ENCODE measurements at regions of chr19 and their contacts with region 1.

Region 1: DNA sequence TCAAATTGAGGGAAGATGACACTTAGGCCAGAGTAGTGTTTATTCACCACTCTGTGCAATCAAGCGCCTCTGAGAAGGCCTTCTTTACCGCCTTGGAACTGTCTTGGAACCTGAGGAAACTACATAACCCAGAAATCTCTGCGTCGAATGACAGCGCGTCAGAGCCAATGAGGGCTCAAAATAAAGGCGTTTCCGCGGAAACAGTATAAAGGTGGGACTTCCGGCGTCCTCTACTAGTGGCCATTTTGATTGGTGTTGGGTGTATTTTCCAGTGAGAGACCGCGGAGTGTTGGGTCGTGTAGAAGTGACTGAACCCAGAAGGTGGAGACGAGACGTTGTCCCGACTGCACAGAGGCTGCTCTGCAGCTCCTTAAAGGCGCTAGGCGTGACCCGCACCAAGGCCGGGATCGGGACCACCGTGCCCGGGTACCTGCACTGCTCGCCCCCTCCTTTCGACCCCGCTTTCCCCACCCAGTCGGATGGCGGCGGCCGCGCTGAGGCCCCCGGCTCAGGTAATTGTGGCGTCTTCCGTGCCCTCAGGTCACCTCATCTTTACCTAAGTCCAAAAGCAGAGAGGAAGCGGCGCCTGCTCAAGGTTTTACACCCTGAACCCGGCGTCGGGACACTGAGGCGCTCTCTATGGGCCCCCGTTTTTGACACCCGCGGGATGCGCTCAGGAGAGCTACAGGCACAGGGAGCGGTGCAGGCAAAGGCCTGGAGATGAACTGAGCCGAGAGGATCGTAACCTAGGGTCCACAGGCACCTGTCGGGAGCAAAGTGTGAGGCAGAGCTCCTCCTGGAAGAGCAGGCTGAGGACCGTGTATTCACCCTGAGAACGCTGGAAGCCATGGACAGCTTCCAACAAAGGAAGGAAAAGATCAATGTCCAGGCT is at the start of gene ZNF776:
- DNase-seq: peak; percentile 78 to 90 (median 87)
- ATAC-seq: peak; percentile 97 to 98
- H3K4me3 ChIP-seq: peak within 1 kb of the TSS; percentile 93
- H3K27ac ChIP-seq: peak within 1 kb of the TSS; percentile 55
- H3K4me1 ChIP-seq: peaks cover 9% of the 10 kb centered on the region
- H3K27me3 ChIP-seq: no peaks in the 10 kb centered on the region
- total RNA-seq, gene ZNF776: 11.9 to 16.0 (median 13.7) TPM

Region 2: DNA sequence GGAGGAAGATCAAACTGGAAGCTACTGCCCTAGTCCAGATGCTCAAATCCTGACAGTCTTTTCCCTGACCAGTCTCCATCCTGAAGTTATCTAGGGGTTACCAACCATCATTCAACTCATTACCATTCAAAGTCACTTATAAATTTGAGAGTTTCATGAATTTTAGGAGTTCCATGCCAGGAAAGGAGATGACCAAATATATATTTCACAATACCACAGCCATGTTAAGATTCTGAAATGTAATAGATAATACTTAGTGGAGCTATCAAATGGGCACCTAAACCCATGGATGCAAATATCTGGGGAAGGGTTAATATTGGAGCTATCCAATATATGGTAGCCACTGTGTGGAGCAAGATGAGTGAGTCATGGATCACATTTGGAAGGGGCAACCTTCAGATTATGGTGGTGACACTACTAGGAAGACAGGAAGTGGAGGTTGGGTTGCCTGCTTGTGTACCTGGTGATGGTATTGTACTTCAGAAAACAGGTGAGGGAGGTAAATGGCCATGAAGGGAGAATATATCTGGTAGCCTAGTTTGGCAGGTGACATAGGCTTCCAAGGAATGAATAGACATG is 41.4 kb after region 1 on chr19:
- intact Hi-C with region 1: no loop called
- DNase-seq: no peak
- ATAC-seq: no peak
- H3K4me3 ChIP-seq: no peak overlapping the region
- H3K27ac ChIP-seq: no peak overlapping the region
- H3K4me1 ChIP-seq: no peaks in the 10 kb centered on the region
- H3K27me3 ChIP-seq: no peaks in the 10 kb centered on the region

Region 3: GRCh38 chr19:57814505-57815251 is 67.9 kb after region 1 on chr19 and contains the start of gene ZNF552:
- intact Hi-C with region 1: loop called in 1 of 4 experiments (anchors 2 kb)
- DNase-seq: peak; percentile 87 to 94 (median 89)
- ATAC-seq: peak; percentile 95 to 96
- H3K4me3 ChIP-seq: peak within 1 kb of the TSS; percentile 64
- H3K27ac ChIP-seq: peak within 1 kb of the TSS; percentile 70
- H3K4me1 ChIP-seq: peaks cover 4% of the 10 kb centered on the region
- H3K27me3 ChIP-seq: no peaks in the 10 kb centered on the region
- total RNA-seq, gene ZNF552: 3.3 to 5.8 (median 3.8) TPM

Region 4: DNA sequence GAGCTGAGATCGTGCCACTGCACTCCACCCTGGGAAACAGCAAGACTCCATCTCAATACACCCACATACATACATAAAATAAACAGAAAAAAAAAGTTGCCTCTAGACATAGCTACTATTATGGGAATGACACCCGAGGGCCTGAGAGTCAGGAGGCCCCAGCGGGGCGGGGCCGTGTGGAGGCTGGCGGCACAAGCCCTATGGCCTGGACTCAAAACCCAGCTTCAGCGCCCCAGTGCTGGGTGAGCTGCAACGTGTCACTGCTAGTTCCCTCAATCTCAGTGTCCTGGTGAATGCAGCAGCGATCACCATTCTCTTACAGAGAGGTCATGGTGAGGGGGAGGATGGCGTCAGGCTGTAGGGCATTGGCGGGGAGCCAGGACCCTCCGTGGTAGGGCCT is 277.8 kb after region 1 on chr19:
- intact Hi-C with region 1: no loop called
- DNase-seq: no peak
- ATAC-seq: no peak
- H3K4me3 ChIP-seq: no peak overlapping the region
- H3K27ac ChIP-seq: no peak overlapping the region
- H3K4me1 ChIP-seq: no peaks in the 10 kb centered on the region
- H3K27me3 ChIP-seq: no peaks in the 10 kb centered on the region